Gastrocnemius medialis (tissue), 4 donors: ENCODE measurements at regions of chr3 and their contacts with region 1.

Region 1: GRCh38 chr3:50321336-50322114 is 1.0 kb downstream of the HYAL2 start:
- DNase-seq: peak; percentile 82 to 88
- ATAC-seq: peak; percentile 88
- H3K4me3 ChIP-seq: peak overlapping the region; percentile 72 to 85 (median 79)
- H3K27ac ChIP-seq: peak overlapping the region; percentile 93 to 96 (median 95)
- H3K4me1 ChIP-seq: peaks cover 54 to 56% of the 10 kb centered on the region in 2 donors
- H3K27me3 ChIP-seq: no peaks in the 10 kb centered on the region
- CTCF ChIP-seq: peak; percentile 44 to 71 (median 59)
- POLR2A ChIP-seq: peak in 1 of 2 donors; percentile 75

Region 2: GRCh38 chr3:50260027-50260941 is 61.2 kb before region 1 on chr3:
- in situ Hi-C with region 1: no loop called
- intact Hi-C with region 1: loop called (anchors 2 kb)
- DNase-seq: peak; percentile 78 to 88
- ATAC-seq: peak; percentile 91 to 93
- H3K4me3 ChIP-seq: peak overlapping the region; percentile 72 to 94 (median 81)
- H3K27ac ChIP-seq: peak overlapping the region; percentile 96 to 99 (median 98)
- H3K4me1 ChIP-seq: peaks cover 31 to 39% of the 10 kb centered on the region in 2 donors
- H3K27me3 ChIP-seq: no peaks in the 10 kb centered on the region
- CTCF ChIP-seq: peak; percentile 89 to 100 (median 100)
- POLR2A ChIP-seq: peak; percentile 57 to 70

Region 3: GRCh38 chr3:50298836-50299637 is 22.5 kb before region 1 on chr3 and contains the starts of genes HYAL3 and NAA80:
- in situ Hi-C with region 1: no loop called
- intact Hi-C with region 1: loop called (anchors 2 kb)
- DNase-seq: peak; percentile 99 to 100
- ATAC-seq: peak; percentile 87
- H3K4me3 ChIP-seq: peak within 1 kb of the TSS; percentile 66 to 91 (median 76)
- H3K27ac ChIP-seq: peak within 1 kb of the TSS; percentile 85 to 91 (median 88)
- H3K4me1 ChIP-seq: peaks cover 29 to 48% of the 10 kb centered on the region in 2 donors
- H3K27me3 ChIP-seq: no peaks in the 10 kb centered on the region
- CTCF ChIP-seq: peak; percentile 43 to 62 (median 51)
- POLR2A ChIP-seq: peak; percentile 94 to 96
- total RNA-seq, gene HYAL3: 1.1 to 2.3 (median 1.2) TPM in 3 of 4 donors, not detected in the other
- total RNA-seq, gene NAA80: 12.5 to 22.1 (median 14.8) TPM

Region 4: GRCh38 chr3:50337191-50337841 is 15.8 kb after region 1 on chr3:
- in situ Hi-C with region 1: no loop called
- intact Hi-C with region 1: loop called (anchors 1 kb)
- DNase-seq: peak; percentile 100
- ATAC-seq: peak; percentile 84 to 86
- H3K4me3 ChIP-seq: peak overlapping the region; percentile 75 to 91 (median 82)
- H3K27ac ChIP-seq: peak overlapping the region; percentile 89 to 98 (median 97)
- H3K4me1 ChIP-seq: peaks cover 38 to 64% of the 10 kb centered on the region in 2 donors
- H3K27me3 ChIP-seq: no peaks in the 10 kb centered on the region
- CTCF ChIP-seq: no peak
- POLR2A ChIP-seq: peak; percentile 94 to 96

Region 5: GRCh38 chr3:50405249-50405648 is 83.7 kb after region 1 on chr3:
- in situ Hi-C with region 1: no loop called
- intact Hi-C with region 1: no loop called
- DNase-seq: no peak
- ATAC-seq: no peak
- H3K4me3 ChIP-seq: no peak overlapping the region
- H3K27ac ChIP-seq: no peak overlapping the region
- H3K4me1 ChIP-seq: no peaks in the 10 kb centered on the region
- H3K27me3 ChIP-seq: no peaks in the 10 kb centered on the region
- CTCF ChIP-seq: no peak
- POLR2A ChIP-seq: no peak